ENCODE measurements at regions of chr6 and their contacts with region 1.

Region 1: DNA sequence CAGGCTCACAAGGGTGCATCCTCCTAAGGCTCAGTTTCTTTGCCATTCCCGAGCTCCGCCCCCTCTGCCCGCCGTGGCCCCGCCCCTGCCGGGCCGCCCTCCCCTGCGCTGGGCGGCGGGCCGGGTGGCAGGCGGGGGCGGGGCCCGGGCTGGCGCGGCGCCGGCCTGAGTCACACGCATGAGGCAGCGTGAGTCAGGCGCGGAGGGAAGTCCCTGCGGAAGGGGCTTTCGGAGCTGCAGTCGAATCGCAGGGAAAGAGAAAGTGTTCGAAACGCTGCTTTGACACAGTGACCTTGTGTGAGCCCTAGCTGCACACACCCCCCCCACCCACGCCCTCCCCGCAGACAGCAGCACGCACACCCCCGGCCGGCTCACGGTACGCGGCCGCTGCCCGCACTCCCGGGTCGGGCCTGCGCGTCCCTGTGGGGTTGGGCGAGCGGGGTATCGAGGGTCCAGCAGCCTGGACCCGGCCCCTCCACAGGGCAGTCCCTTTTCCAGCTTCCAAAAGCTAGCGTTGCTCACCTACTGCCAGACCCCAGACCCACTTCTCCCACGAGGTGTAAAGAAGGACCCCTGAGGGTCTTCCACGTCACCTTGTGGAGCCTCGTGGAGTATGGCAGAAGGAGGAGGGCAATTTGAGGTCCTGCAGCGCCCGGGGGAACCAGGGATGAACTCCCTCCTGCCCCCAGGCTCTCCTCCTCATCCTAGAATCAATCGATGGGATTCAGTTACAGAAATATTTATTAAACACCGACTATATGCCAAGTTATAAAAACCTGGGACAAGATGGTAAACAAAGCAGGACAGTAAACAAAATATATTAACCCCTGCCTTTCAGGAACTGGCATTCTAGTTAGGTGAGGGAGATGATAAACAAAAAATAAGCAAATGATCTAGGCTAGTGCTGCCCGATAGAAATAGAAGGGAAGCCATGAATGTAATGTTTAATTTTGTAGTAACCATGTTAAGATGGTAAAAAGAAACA is 12.4 kb upstream of the HMGA1 start:
- DNase-seq: peak; percentile 96
- H3K4me3 Mint-ChIP-seq: peak overlapping the region; percentile 69
- H3K27ac Mint-ChIP-seq: peak overlapping the region; percentile 92
- H3K4me1 Mint-ChIP-seq: peaks cover 43% of the 10 kb centered on the region
- H3K27me3 Mint-ChIP-seq: no peaks in the 10 kb centered on the region

Region 2: DNA sequence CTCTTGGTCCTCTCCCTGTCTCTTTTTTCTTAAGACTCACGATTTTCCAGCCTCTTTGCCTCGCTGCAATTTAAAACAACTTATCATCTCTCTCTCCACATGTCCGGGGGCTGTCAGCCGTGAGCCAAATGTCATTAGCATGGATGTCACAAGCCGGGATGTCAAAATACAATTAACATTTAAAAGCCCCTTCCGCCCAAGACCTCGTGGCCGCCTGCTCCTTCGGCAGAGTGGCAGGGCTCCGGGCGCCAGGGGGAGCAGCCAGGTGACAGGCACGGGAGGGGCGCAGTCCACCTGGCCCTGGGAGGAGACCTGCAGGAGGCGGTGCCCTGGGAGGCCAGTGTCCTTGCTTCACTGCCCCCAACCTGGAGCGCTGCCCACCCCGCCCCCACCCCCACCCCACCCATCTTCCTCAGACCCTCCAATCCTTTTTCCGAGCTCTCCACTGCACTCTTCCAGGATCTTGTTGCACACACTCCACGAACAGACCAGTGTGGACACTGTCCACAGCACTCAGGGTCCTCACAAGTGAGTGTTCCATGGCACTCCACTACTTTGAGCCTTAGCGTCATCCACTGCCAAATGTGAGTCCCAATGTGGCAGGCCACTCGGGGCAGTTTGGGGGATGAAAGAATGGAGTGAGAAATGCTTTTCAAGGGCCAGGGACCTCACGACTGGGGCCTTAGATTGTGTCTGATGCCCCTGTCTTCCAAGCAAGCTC is 72.8 kb before region 1 on chr6:
- CTCF ChIA-PET with region 1: no interaction called
- intact Hi-C with region 1: no loop called
- DNase-seq: no peak
- H3K4me3 Mint-ChIP-seq: no peak overlapping the region
- H3K27ac Mint-ChIP-seq: no peak overlapping the region
- H3K4me1 Mint-ChIP-seq: peaks cover 8% of the 10 kb centered on the region
- H3K27me3 Mint-ChIP-seq: peaks cover 44% of the 10 kb centered on the region

Region 3: DNA sequence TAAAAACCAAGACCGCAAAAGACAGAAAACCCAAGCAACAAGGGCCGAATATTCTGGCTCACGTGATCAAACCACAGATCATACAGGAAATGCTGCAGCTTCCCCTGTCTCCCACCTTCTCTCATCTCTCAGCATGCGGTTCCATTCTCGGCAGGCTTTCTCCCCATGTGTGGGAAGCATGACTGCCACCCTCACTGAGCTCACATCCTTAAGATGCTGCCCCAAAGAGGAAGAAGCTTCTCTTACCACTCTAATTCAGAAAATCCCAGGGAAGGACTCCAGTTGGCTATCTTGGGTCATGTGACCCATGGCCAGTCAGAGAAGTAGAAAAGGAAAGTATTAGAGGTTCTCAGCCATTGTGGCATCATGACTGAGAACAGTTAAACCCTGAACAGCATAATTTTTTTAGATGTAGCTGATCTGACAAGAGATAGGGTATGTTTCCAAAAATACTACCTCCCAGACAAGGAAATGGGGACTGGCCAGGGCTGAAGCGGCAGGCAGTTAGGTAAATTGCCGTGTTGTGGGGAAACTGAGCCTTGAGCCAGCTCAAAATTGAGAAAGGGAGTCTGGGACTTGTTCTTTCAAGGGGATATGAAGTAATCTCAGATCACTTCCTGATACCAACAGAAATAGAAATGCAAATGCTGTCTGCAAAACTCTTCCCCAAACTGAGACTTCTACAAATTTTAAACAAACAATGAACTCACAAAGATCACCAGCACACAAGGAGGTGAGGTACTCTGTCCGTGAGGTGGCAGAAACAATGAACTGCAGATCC is 41.3 kb before region 1 on chr6:
- CTCF ChIA-PET with region 1: interaction called, 6 read pairs
- intact Hi-C with region 1: loop called (anchors 1 kb)
- DNase-seq: peak; percentile 83
- H3K4me3 Mint-ChIP-seq: peak overlapping the region; percentile 76
- H3K27ac Mint-ChIP-seq: peak overlapping the region; percentile 86
- H3K4me1 Mint-ChIP-seq: peaks cover 17% of the 10 kb centered on the region
- H3K27me3 Mint-ChIP-seq: no peaks in the 10 kb centered on the region

Region 4: GRCh38 chr6:34236131-34236996 is 12.1 kb after region 1 on chr6 and contains the start of gene HMGA1:
- CTCF ChIA-PET with region 1: interaction called, 3 read pairs
- intact Hi-C with region 1: loop called (anchors 1 kb)
- DNase-seq: peak; percentile 89
- H3K4me3 Mint-ChIP-seq: peak within 1 kb of the TSS; percentile 91
- H3K27ac Mint-ChIP-seq: peak within 1 kb of the TSS; percentile 93
- H3K4me1 Mint-ChIP-seq: peaks cover 42% of the 10 kb centered on the region
- H3K27me3 Mint-ChIP-seq: no peaks in the 10 kb centered on the region
- total RNA-seq, gene HMGA1: 705 to 712 TPM

Region 5: GRCh38 chr6:34887753-34888513 is 663.7 kb after region 1 on chr6 and contains the start of gene TAF11:
- CTCF ChIA-PET with region 1: no interaction called
- intact Hi-C with region 1: loop called (anchors 1 kb)
- DNase-seq: peak; percentile 97
- H3K4me3 Mint-ChIP-seq: peak within 1 kb of the TSS; percentile 99
- H3K27ac Mint-ChIP-seq: peak within 1 kb of the TSS; percentile 96
- H3K4me1 Mint-ChIP-seq: peaks cover 52% of the 10 kb centered on the region
- H3K27me3 Mint-ChIP-seq: no peaks in the 10 kb centered on the region
- total RNA-seq, gene TAF11: 27.3 to 28.5 TPM